Panc1 (cell line): ENCODE measurements at regions of chr19 and their contacts with region 1.

Region 1: GRCh38 chr19:46860125-46860845 is 512 bp upstream of the ARHGAP35 start:
- DNase-seq: no peak
- ATAC-seq: peak; percentile 83
- H3K4me3 ChIP-seq: peak overlapping the region; percentile 70 to 73
- H3K27ac ChIP-seq: peak overlapping the region; percentile 82; the same call in 1 of the 2 replicates
- H3K4me1 ChIP-seq: peaks cover 27% of the 10 kb centered on the region
- H3K27me3 ChIP-seq: no peaks in the 10 kb centered on the region
- CTCF ChIP-seq: no peak

Region 2: DNA sequence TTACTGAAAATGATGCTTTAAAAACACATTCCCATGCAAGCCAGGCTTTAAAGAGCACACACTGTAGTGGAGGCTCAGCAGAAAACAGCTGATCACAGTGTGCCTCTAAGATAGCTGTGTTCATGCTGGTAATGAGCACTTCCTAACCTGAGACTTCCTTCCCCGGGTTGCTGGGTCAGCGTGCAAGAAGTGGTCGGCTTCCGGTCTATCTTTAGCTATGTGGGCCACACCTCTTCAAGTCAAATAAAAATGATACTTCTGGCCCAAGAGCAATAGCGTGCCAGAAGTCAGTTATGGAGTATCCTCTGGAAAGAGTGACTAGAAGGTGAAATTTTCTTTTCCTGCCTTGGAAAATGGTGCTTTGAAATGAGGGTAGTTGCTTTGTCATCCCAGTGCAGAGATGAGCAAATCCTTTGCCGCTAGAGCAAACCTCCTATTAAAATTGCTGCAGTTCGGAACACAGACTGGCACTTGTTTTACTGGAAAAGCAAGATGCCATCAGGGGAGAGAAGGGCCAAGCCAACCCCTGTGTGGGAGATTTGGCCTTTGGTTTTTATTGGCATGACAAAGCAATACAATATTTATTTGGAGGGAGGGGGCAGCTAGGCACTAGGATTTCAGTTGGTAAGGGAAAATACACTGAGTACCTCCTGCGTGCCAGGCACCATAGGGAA is 64.7 kb after region 1 on chr19:
- CTCF ChIA-PET with region 1: no interaction called
- POLR2A ChIA-PET with region 1: interaction called, 4 read pairs
- in situ Hi-C with region 1: no loop called
- intact Hi-C with region 1: loop called (anchors 10 kb)
- DNase-seq: no peak
- ATAC-seq: peak; percentile 77
- H3K4me3 ChIP-seq: no peak overlapping the region
- H3K27ac ChIP-seq: peak overlapping the region; percentile 83
- H3K4me1 ChIP-seq: peaks cover 45% of the 10 kb centered on the region
- H3K27me3 ChIP-seq: no peaks in the 10 kb centered on the region
- CTCF ChIP-seq: no peak

Region 3: GRCh38 chr19:47112997-47113849 is 252.9 kb after region 1 on chr19 and contains the start of gene ZC3H4:
- CTCF ChIA-PET with region 1: no interaction called
- POLR2A ChIA-PET with region 1: interaction called, 15 read pairs
- in situ Hi-C with region 1: no loop called
- intact Hi-C with region 1: no loop called
- DNase-seq: peak; percentile 90
- ATAC-seq: peak; percentile 92
- H3K4me3 ChIP-seq: peak within 1 kb of the TSS; percentile 85 to 97
- H3K27ac ChIP-seq: peak within 1 kb of the TSS; percentile 97
- H3K4me1 ChIP-seq: peaks cover 20% of the 10 kb centered on the region
- H3K27me3 ChIP-seq: no peaks in the 10 kb centered on the region
- CTCF ChIP-seq: no peak
- total RNA-seq, gene ZC3H4: 42.7 TPM